ENCODE measurements at regions of chr17 and their contacts with region 1.

Region 1: GRCh38 chr17:31313982-31314784 is at the start of gene EVI2B:
- DNase-seq: peak; percentile 81 to 95 (median 92)
- H3K4me3 ChIP-seq: peak within 1 kb of the TSS; percentile 90 to 100 (median 96)
- H3K4me3 Mint-ChIP-seq: peak within 1 kb of the TSS; percentile 93 to 98
- H3K27ac ChIP-seq: peak within 1 kb of the TSS; percentile 86 to 93
- H3K27ac Mint-ChIP-seq: peak within 1 kb of the TSS; percentile 92 to 98 (median 97)
- H3K4me1 ChIP-seq: peaks cover 36 to 56% of the 10 kb centered on the region in 2 donors
- H3K4me1 Mint-ChIP-seq: peaks cover 41% of the 10 kb centered on the region
- H3K27me3 ChIP-seq: no peaks in the 10 kb centered on the region
- H3K27me3 Mint-ChIP-seq: no peaks in the 10 kb centered on the region
- CTCF ChIP-seq: no peak
- polyA plus RNA-seq, gene EVI2B: 166 to 267 (median 262) TPM

Region 2: DNA sequence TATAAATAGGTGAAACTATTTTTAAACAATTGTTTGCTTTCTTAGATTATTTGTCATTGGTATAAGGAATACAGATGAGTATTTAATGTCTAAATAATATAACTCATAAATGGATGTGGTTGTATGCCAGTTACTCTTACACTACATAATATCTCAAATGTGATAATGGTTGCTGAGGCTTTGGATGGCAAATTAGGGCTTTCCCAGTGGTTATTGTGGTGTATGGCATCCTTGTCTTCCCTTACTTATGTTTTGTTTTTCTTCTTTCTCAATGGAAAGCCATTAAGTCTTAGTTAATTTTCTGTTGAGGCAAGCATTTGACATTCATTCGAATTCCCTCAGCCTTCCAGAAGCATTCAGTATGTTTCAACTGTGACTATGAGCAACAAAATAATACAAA is 27.6 kb before region 1 on chr17:
- intact Hi-C with region 1: no loop called
- DNase-seq: no peak
- H3K4me3 ChIP-seq: no peak overlapping the region
- H3K4me3 Mint-ChIP-seq: no peak overlapping the region
- H3K27ac ChIP-seq: no peak overlapping the region
- H3K27ac Mint-ChIP-seq: no peak overlapping the region
- H3K4me1 ChIP-seq: peaks cover 0 to 5% of the 10 kb centered on the region in 2 donors
- H3K4me1 Mint-ChIP-seq: peaks cover 8% of the 10 kb centered on the region
- H3K27me3 ChIP-seq: no peaks in the 10 kb centered on the region
- H3K27me3 Mint-ChIP-seq: no peaks in the 10 kb centered on the region
- CTCF ChIP-seq: no peak

Region 3: DNA sequence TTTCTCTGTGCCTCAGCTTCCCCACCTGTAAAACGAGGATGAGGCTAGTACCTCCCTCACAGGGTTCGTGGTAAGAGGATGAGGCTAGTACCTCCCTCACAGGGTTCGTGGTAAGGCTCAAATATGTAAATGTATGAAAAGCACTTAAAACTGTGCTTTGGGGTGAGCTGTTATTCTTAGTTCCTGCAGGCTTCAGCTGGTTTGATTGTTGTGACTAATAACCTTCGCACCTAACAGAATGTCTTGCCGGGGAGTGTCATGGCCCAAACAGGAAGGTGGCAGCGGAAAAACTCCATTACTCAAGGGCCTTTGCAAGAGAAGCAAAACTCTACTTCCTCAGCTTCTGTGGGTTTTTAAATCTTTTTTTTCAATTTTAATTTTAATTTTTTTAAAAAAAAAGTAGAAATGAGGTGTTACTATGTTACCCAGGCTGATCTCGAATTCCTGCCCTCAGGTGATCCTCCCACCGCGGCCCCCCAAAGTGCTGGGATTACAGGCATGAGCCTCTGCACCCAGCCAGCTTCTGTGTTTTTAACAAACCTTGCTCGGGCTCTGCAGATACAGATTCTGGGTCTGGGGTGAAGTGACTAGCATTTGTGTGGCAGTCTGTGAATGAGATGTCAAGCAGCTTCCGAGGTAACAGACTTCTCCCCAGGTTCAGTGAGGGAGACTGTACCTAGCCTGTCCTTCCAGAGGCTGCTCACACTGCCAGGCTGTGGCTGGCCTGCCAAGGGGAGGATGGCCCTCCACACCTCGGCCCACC is 180.3 kb after region 1 on chr17:
- intact Hi-C with region 1: loop called in 1 of 2 experiments (anchors 5 kb)
- DNase-seq: peak; percentile 89 to 92 (median 92)
- H3K4me3 ChIP-seq: peak overlapping the region in 1 of 3 experiments; percentile 70
- H3K4me3 Mint-ChIP-seq: peak overlapping the region; percentile 69 to 88
- H3K27ac ChIP-seq: peak overlapping the region; percentile 92 to 97
- H3K27ac Mint-ChIP-seq: peak overlapping the region; percentile 96 to 99 (median 98)
- H3K4me1 ChIP-seq: peaks cover 64 to 71% of the 10 kb centered on the region in 2 donors
- H3K4me1 Mint-ChIP-seq: peaks cover 66% of the 10 kb centered on the region
- H3K27me3 ChIP-seq: peaks cover 0 to 4% of the 10 kb centered on the region in 2 donors
- H3K27me3 Mint-ChIP-seq: peaks cover 3 to 12% (median 8%) of the 10 kb centered on the region in 3 donors
- CTCF ChIP-seq: no peak